Heart right ventricle (tissue), 16 donors: ENCODE measurements at regions of chr1 and their contacts with region 1.

Region 1: GRCh38 chr1:55155514-55155913 is 59.6 kb downstream of the USP24 start:
- DNase-seq: peak; percentile 33 to 76
- ATAC-seq: peak; percentile 50 to 95 (median 89)
- H3K4me3 ChIP-seq: no peak overlapping the region
- H3K27ac ChIP-seq: no peak overlapping the region
- H3K4me1 ChIP-seq: peaks cover 0 to 21% (median 0%) of the 10 kb centered on the region in 9 donors
- H3K27me3 ChIP-seq: no peaks in the 10 kb centered on the region
- CTCF ChIP-seq: no peak

Region 2: DNA sequence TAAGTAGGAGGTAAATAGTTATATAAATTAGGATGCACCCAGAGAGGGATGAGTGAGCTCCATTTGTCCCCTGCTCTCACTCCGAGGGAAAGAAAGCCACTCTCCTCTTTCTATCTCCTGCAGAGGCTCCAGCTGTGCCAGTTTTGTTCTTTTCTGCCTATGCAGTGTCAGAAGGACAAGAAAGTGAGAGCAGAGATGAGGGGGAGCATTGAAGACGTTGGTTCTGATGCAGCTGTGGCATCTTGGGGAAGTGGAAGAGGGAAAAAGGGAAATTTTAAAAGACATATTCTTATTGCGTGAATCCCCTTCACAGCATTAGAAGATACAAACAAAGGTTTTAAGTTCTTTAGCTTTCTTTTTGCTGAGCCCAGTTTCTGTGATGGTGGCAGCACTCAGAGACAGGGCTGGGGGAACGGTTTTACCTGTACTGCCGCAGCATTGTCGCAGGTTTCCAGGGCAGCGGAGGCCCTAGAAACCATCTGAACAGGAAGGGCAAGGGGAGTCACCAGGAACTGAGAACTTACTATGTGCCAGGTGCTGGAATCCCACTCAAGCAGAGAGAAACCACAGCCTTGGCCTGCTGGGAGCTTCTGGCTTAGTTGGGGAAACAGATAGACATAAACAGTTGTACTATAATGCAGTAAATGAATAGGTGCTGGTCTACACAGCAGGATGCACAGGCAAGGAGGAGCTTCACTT is 104.5 kb after region 1 on chr1:
- intact Hi-C with region 1: loop called in 1 of 10 experiments (anchors 5 kb)
- DNase-seq: no peak
- ATAC-seq: no peak
- H3K4me3 ChIP-seq: no peak overlapping the region
- H3K27ac ChIP-seq: no peak overlapping the region
- H3K4me1 ChIP-seq: no peaks in the 10 kb centered on the region
- H3K27me3 ChIP-seq: no peaks in the 10 kb centered on the region
- CTCF ChIP-seq: no peak